ENCODE measurements at regions of chr11 and their contacts with region 1.

Region 1: DNA sequence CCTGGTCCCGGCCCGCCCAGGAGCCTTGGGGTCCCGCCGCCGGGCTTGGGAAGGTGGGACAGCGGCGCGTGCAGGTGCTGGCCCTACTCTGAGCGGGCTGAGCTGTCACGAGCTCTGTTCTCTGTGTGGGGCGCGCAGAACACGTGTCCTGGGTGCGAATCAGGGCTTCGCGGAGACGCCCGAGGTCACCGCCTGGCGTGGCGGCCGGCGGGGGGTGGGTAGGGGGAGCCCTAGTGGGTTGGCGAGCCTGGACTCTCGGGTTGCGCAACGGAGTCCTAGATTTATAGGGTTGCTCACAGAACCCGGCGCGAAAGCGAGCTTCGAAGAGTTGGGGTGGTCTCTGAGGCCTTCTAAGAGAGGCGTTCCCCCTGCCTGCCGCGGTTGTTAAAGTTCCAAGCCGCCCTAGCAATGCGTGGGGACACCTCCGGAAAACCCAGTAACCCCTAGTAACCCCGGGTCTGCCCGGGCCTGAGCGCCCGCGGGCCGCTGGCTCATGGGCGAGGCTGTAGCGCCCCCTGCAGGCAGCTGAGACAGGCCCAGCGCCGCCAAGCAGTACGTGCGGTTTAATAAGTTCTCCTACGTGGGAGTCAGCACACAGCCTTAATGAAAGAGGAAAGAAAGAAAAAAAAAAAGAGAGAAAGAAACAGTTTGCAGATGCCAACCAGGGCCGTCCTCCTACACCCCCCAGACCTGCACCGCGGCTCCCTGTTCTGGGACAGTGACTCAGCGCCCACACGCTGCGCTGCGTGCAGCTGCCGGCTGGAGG is 2.8 kb downstream of the ADM start:
- DNase-seq: peak; percentile 91 to 93
- ATAC-seq: peak; percentile 45 to 61
- H3K4me3 ChIP-seq: peak overlapping the region; percentile 75
- H3K27ac ChIP-seq: peak overlapping the region; percentile 94
- H3K4me1 ChIP-seq: peaks cover 29% of the 10 kb centered on the region
- CTCF ChIP-seq: peak; percentile 99
- EP300 ChIP-seq: peak in 1 of 2 experiments; percentile 41; a peak in 2 of 5 replicates
- POLR2A ChIP-seq: peak; percentile 54
- RAD21 ChIP-seq: peak; percentile 88 to 98

Region 2: GRCh38 chr11:9757809-9758636 is 549.6 kb before region 1 on chr11:
- CTCF ChIA-PET with region 1: interaction called, 106 read pairs
- POLR2A ChIA-PET with region 1: interaction called, 53 read pairs
- DNase-seq: peak; percentile 83 to 92
- ATAC-seq: peak; percentile 37 to 79
- H3K4me3 ChIP-seq: peak overlapping the region; percentile 70
- H3K27ac ChIP-seq: peak overlapping the region; percentile 95 to 98
- H3K4me1 ChIP-seq: peaks cover 43% of the 10 kb centered on the region
- CTCF ChIP-seq: peak; percentile 92
- EP300 ChIP-seq: no peak
- POLR2A ChIP-seq: peak; percentile 82
- RAD21 ChIP-seq: peak; percentile 70 to 99; a peak in 4 of 5 replicates

Region 3: DNA sequence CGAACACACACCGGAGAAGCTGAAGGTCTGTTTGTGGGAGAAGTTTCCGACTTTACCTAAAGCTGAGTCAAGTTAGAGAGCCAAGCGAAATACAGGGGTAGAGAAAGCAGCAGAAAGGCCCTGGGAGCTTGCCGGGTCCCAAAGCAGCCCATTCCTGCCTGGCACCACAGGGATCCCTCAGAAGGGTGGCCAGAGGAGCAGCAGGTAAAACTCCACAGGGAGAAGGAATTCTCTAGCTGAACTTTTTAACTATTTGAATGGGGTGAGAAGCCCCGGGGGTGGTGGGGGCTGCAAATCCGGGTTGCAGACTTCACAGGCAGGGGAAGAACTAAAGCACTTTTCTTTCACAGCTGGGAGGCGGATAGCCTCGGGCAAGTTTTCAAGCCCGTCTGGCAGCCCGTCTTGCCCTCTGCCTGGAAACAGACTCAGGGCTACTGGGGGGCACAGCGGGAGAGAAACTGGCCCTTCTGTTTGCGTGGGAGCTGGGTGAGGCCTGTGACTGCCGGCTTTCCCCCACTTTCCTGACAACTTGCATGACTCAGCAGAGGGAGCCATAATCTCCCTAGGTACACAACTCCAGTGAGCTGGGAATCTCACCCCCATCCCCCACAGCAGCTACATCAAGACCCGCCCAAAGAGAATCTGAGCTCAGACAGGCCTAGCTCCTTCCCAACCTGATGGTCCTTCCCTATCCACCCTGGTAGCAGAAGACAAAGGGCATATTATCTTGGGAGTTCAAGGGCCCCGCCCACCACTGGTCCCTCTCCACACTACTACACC is 324.6 kb before region 1 on chr11:
- CTCF ChIA-PET with region 1: interaction called, 9 read pairs
- POLR2A ChIA-PET with region 1: interaction called, 40 read pairs
- DNase-seq: peak; percentile 32 to 97
- ATAC-seq: peak; percentile 83 to 91
- H3K4me3 ChIP-seq: peak overlapping the region; percentile 19; the same call in 1 of the 3 replicates
- H3K27ac ChIP-seq: peak overlapping the region; percentile 95
- H3K4me1 ChIP-seq: peaks cover 37% of the 10 kb centered on the region
- CTCF ChIP-seq: no peak
- EP300 ChIP-seq: peak in 1 of 2 experiments; percentile 77; a peak in 3 of 5 replicates
- POLR2A ChIP-seq: no peak
- RAD21 ChIP-seq: peak; percentile 33 to 55; a peak in 4 of 5 replicates

Region 4: DNA sequence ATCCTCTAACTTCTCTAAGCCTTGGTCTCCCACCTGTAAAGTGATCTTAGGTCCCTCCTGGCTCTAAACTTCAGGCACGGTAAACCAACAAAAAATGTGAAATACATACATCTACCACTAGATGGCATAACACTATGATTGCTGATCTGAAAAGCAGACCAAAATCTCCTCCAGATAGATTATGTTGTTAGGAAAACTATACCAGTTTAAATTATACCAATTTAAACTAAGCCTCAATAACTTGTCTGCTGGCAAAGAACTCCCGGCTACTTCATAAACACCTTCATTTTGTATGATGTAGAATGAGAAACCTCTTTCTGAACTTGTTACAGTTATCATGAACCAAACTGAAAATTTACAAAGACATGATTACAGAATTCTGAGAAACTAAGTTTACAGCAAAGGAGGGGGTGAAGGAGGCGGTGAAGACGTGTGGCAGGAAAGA is 99.5 kb before region 1 on chr11:
- CTCF ChIA-PET with region 1: interaction called, 65 read pairs
- POLR2A ChIA-PET with region 1: interaction called, 5 read pairs
- DNase-seq: peak; percentile 54 to 58
- ATAC-seq: peak; percentile 76 to 87; a peak in 5 of 6 replicates
- H3K4me3 ChIP-seq: no peak overlapping the region
- H3K27ac ChIP-seq: no peak overlapping the region
- H3K4me1 ChIP-seq: 0 out of 3 replicates have a peak, but pooled peaks cover 5% of the 10 kb centered on the region
- CTCF ChIP-seq: peak; percentile 80
- EP300 ChIP-seq: no peak
- POLR2A ChIP-seq: no peak
- RAD21 ChIP-seq: peak; percentile 63 to 69

Region 5: DNA sequence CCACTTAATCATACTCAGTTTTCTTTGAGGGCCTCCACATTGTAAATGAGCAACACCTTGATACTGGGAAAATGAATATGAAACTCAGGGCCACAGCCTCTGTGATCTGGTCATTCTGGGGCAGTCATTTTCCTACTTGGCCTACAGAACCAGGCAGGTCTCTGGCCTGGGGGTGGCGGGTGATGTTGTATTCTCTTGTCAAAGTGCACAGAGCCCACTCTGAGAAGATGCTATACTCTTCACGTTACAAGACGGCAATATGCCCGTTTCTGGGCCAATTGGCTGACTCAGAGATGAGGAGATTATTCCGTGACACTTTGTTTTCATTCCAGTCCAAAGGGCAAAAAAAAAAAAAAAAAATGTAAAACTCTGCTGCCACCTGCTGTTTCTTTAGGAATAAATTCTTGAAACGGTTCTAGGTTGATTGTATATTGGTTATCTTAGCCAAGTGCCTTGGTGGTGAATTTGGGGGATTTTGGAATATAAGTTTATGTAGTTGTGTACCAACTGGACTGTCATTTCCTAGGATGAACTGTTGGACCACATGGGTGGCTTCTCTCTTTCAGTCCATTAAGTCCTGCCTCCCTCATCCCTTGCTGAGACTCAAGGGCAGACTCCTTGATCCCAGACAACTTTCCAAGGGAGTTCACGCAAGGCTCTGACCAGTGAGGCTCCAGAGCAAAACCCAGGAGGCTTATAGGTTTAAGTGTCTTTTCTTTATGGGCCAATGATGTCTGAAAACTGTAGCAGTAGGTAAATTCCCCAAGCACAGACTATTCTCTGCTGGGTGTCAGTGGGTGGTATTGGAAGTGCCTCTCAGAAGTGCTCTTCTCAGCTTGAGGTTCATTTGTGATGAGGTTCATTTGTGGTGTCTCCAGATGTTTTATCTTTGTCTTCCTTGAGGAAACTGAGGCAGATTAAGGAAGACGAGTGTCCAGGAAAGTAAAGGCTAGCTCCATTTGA is 15.5 kb after region 1 on chr11:
- CTCF ChIA-PET with region 1: interaction called, 188 read pairs
- POLR2A ChIA-PET with region 1: interaction called, 6 read pairs
- DNase-seq: peak; percentile 65 to 87
- ATAC-seq: peak; percentile 79 to 80
- H3K4me3 ChIP-seq: peak overlapping the region; percentile 3; the same call in 1 of the 3 replicates
- H3K27ac ChIP-seq: peak overlapping the region; percentile 73 to 84
- H3K4me1 ChIP-seq: peaks cover 65% of the 10 kb centered on the region
- CTCF ChIP-seq: peak; percentile 73
- EP300 ChIP-seq: no peak
- POLR2A ChIP-seq: no peak
- RAD21 ChIP-seq: peak; percentile 84 to 89

Measured in A549 (cell line).